Endothelial cell of umbilical vein (primary cell): ENCODE measurements at regions of chr13 and their contacts with region 1.

Region 1: DNA sequence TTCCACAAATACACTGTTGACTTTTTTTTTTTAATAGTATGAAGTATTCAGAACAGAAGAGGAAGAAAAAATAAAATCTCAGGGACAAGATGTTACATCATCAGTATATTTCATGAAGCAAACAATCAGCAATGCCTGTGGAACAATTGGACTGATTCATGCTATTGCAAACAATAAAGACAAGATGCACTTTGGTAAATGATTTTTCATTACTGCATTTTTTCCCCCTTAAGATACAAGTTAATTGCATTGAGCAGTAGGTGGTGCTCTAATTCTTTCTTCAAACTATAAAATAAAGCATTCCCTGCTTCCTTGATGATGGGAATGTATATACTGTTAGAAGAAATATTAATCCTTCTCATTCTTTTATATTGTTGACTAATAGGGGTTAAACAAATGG is 17.1 kb downstream of the UCHL3 start:
- DNase-seq: peak; percentile 46
- H3K4me3 ChIP-seq: no peak overlapping the region
- H3K27ac ChIP-seq: no peak overlapping the region
- H3K4me1 ChIP-seq: no peaks in the 10 kb centered on the region
- H3K27me3 ChIP-seq: no peaks in the 10 kb centered on the region
- CTCF ChIP-seq: peak in 1 of 2 donors; percentile 22
- POLR2A ChIP-seq: no peak

Region 2: DNA sequence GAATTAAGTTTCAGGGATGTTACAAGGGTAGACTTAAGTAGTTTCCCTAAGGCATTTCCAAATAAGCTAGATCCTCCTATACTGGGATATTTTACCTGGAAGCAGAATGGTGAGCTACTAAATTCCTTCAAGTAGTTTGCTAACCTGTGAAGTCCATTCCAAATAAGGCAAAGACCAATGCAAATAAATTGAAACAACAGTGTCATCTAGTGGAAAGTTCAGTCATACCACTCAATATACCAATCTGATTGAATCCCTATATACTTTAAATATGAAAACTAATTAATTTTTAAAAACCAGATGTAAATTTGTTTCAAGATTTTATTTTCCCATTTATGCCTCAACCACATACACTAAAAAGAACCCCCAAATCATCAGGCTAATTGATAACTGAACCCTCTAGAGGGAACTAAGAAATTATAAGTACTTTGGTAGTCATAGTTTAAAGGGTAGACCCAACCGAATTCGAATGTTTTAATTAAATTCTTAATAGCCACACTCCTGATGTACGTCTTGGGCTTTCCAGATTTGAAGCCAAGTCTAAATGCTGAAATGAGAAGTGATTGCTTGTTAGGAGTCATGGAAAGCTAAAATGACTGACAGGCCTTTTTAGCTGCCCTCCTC is 308.4 kb before region 1 on chr13:
- CTCF ChIA-PET with region 1: no interaction called
- POLR2A ChIA-PET with region 1: no interaction called
- dilution Hi-C with region 1: no loop called
- intact Hi-C with region 1: no loop called
- DNase-seq: peak; percentile 65
- H3K4me3 ChIP-seq: no peak overlapping the region
- H3K27ac ChIP-seq: no peak overlapping the region
- H3K4me1 ChIP-seq: no peaks in the 10 kb centered on the region
- H3K27me3 ChIP-seq: peaks cover 13 to 33% of the 10 kb centered on the region in 2 experiments
- CTCF ChIP-seq: peak; percentile 35 to 37
- POLR2A ChIP-seq: no peak

Region 3: GRCh38 chr13:75518439-75519088 is 48.1 kb before region 1 on chr13:
- CTCF ChIA-PET with region 1: no interaction called
- POLR2A ChIA-PET with region 1: no interaction called
- dilution Hi-C with region 1: no loop called
- intact Hi-C with region 1: no loop called
- DNase-seq: no peak
- H3K4me3 ChIP-seq: no peak overlapping the region
- H3K27ac ChIP-seq: no peak overlapping the region
- H3K4me1 ChIP-seq: no peaks in the 10 kb centered on the region
- H3K27me3 ChIP-seq: no peaks in the 10 kb centered on the region
- CTCF ChIP-seq: no peak
- POLR2A ChIP-seq: no peak

Region 4: GRCh38 chr13:75675421-75675820 is 108.8 kb after region 1 on chr13:
- CTCF ChIA-PET with region 1: no interaction called
- POLR2A ChIA-PET with region 1: no interaction called
- dilution Hi-C with region 1: no loop called
- intact Hi-C with region 1: loop called (anchors 1 kb)
- DNase-seq: no peak
- H3K4me3 ChIP-seq: no peak overlapping the region
- H3K27ac ChIP-seq: no peak overlapping the region
- H3K4me1 ChIP-seq: peaks cover 1% of the 10 kb centered on the region
- H3K27me3 ChIP-seq: no peaks in the 10 kb centered on the region
- CTCF ChIP-seq: no peak
- POLR2A ChIP-seq: no peak

Region 5: DNA sequence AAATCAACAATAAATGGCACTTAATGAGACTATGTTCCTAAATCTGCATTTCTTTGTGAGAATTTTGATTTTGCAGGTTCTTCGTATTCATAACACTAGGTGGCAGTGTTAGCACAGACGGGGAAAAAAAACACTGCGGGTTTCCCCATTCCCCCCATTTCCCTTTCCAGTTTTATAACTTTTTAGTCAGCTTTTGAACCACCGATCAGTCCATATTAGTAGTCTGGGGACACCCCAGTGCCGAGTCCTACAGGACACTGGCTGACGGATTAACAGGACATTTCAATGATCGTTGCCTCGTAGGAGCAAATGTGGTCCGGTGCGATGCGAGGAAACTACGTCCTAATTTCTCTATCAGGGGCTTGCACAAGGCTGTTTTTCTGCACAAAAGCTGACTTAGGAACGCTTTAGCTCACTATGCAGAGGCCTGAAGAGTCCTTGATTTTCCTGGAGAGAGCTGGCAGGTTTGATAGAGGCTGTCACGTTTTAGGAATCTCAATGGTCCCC is 303.8 kb after region 1 on chr13:
- CTCF ChIA-PET with region 1: no interaction called
- POLR2A ChIA-PET with region 1: no interaction called
- dilution Hi-C with region 1: no loop called
- intact Hi-C with region 1: loop called (anchors 5 kb)
- DNase-seq: peak; percentile 36
- H3K4me3 ChIP-seq: peak overlapping the region; percentile 28 to 74 (median 37)
- H3K27ac ChIP-seq: no peak overlapping the region
- H3K4me1 ChIP-seq: peaks cover 4% of the 10 kb centered on the region
- H3K27me3 ChIP-seq: peaks cover 0 to 2% of the 10 kb centered on the region in 2 experiments
- CTCF ChIP-seq: peak; percentile 58 to 59
- POLR2A ChIP-seq: no peak

Region 6: DNA sequence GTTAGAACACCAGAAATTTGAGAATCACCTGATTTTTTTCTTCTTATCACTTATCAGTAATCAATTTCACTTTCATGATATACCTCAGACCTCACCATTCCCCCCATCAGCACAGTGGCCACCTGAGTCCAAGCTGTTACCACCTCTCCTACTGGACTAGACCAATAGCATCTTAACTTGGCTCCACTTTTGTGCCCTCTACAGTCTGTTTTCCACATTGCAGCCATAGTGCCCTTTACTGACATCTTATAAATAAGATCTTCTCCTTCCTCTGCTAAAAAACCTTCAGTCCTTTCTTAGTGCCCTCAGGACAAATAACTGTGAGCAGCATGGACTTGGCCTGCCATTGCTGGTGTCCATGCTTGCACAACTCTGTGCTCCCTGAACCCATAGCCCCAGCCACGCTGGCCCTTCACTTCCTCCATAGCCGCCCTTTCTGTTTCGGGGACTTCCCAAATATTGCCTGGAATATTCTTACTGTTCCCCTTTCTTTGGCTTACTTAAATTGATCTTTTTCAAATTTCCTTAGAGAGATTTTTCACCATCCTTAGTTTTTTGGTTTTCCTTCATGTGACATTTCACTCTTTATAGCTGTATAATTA is 450.2 kb after region 1 on chr13:
- CTCF ChIA-PET with region 1: no interaction called
- POLR2A ChIA-PET with region 1: no interaction called
- dilution Hi-C with region 1: no loop called
- intact Hi-C with region 1: loop called (anchors 5 kb)
- DNase-seq: peak; percentile 52
- H3K4me3 ChIP-seq: no peak overlapping the region
- H3K27ac ChIP-seq: no peak overlapping the region
- H3K4me1 ChIP-seq: no peaks in the 10 kb centered on the region
- H3K27me3 ChIP-seq: peaks cover 0 to 2% of the 10 kb centered on the region in 2 experiments
- CTCF ChIP-seq: peak; percentile 44 to 53
- POLR2A ChIP-seq: no peak